Gastrocnemius medialis (tissue), 4 donors: ENCODE measurements at regions of chr1 and their contacts with region 1.

Region 1: GRCh38 chr1:147273409-147274336 is 31.2 kb downstream of the CHD1L start:
- DNase-seq: no peak
- ATAC-seq: peak; percentile 73 to 82
- H3K4me3 ChIP-seq: no peak overlapping the region
- H3K27ac ChIP-seq: peak overlapping the region; percentile 1 to 22 (median 12)
- H3K4me1 ChIP-seq: peaks cover 0 to 4% of the 10 kb centered on the region in 2 donors
- H3K27me3 ChIP-seq: no peaks in the 10 kb centered on the region
- CTCF ChIP-seq: peak in 4 of 5 experiments; percentile 15 to 49 (median 37)
- POLR2A ChIP-seq: no peak

Region 2: DNA sequence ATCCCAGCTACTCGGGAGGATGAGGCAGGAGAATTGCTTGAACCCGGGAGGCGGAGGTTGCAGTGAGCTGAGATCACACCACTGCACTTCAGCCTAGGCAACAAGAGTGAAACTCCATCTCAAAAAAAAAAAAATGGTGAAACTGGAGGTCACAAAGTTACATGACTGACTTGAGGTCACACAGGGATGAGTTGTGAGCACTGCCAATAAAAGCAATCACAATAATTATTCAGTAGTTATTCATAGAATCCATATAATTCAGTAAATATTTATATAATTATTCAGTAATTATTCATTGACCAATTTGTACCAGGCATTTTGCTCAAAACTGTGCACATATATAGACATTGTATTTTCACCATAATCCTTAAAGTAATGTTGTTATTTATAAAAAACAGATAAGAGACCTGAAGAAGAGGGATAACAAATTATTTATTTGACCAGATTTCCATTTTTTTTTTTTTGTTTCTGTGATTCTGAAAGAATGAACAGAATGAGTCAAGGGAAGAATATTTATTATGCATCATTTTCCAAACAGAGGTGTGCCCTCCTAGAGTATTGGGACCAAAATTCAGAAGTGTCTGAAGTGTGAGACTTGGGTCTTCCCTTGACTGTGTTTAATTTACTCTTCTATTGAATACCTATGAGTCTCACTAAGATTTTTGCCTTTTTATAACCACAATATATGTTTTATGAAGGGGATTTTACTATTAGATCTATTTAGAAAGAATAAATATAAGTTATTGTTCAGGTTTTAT is 144.4 kb before region 1 on chr1:
- in situ Hi-C with region 1: no loop called
- intact Hi-C with region 1: no loop called
- DNase-seq: no peak
- ATAC-seq: no peak
- H3K4me3 ChIP-seq: no peak overlapping the region
- H3K27ac ChIP-seq: no peak overlapping the region
- H3K4me1 ChIP-seq: peaks cover 0 to 4% of the 10 kb centered on the region in 2 donors
- H3K27me3 ChIP-seq: no peaks in the 10 kb centered on the region
- CTCF ChIP-seq: no peak
- POLR2A ChIP-seq: no peak

Region 3: GRCh38 chr1:147292631-147293251 is 19.1 kb after region 1 on chr1:
- in situ Hi-C with region 1: no loop called
- intact Hi-C with region 1: no loop called
- DNase-seq: no peak
- ATAC-seq: no peak
- H3K4me3 ChIP-seq: no peak overlapping the region
- H3K27ac ChIP-seq: no peak overlapping the region
- H3K4me1 ChIP-seq: no peaks in the 10 kb centered on the region
- H3K27me3 ChIP-seq: no peaks in the 10 kb centered on the region
- CTCF ChIP-seq: no peak
- POLR2A ChIP-seq: no peak

Region 4: GRCh38 chr1:147897029-147897752 is 623.5 kb after region 1 on chr1:
- in situ Hi-C with region 1: loop called in 1 of 4 experiments (anchors 25 kb)
- intact Hi-C with region 1: loop called (anchors 2 kb)
- DNase-seq: no peak
- ATAC-seq: no peak
- H3K4me3 ChIP-seq: no peak overlapping the region
- H3K27ac ChIP-seq: no peak overlapping the region
- H3K4me1 ChIP-seq: peaks cover 0 to 4% of the 10 kb centered on the region in 2 donors
- H3K27me3 ChIP-seq: no peaks in the 10 kb centered on the region
- CTCF ChIP-seq: no peak
- POLR2A ChIP-seq: no peak